ENCODE measurements at regions of chr2 and their contacts with region 1.

Region 1: DNA sequence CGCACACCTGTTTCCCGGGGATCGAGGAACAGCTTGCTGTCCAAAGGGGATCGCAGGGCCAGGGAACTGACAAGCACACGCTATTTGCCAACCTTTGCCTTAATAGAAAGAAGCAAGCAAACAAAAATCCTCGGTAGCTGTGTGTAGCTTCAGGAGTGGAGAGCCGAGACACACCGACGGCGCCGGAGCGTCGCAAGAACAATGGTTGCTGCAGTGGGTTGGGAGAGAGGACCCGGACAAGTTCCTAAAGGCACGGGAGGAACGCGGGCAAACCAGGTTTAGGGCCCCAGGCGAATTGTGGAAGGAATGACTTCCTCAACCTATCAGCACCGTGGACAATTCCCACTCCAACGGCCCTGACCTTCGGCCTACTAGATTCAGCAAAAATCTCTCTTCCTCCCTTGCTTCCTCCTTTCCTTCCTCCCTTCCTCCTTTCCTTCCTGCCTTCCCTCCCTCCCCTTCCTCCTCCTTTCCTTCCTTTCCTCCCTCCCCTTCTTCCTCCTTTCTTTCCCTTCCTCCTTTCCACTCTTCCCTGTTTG is 4.9 kb upstream of the NEUROD1 start:
- DNase-seq: no peak
- H3K4me3 ChIP-seq: no peak overlapping the region
- H3K27ac ChIP-seq: no peak overlapping the region
- H3K4me1 ChIP-seq: no peaks in the 10 kb centered on the region
- H3K27me3 ChIP-seq: no peaks in the 10 kb centered on the region
- CTCF ChIP-seq: no peak
- EP300 ChIP-seq: no peak
- POLR2A ChIP-seq: no peak

Region 2: DNA sequence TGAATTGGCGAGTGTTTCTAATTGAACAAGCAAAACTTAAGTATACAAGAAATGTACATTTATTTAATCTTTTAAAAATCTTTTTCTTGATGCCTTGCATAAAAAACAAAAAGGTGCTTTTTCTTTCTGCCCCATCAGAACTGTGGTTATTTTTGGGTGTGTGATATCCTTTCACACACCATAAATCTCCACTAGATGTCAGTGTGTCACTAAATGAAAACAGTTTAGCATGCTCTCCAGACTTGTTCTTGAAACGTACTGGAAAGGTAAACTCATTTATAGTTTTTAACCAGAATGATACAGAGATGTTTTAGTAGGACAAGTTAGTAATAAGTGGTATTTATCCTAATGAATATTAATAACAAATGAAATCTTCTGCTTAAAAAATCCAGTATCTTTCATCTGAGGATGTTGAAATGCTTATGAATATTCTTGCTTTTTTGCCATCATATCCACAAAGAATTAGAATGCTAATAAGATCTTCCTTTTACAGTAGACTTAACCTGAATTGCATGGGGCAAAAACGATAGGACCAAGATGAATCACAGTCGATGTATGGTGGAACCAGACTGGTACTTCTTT is 608.0 kb before region 1 on chr2:
- intact Hi-C with region 1: no loop called
- DNase-seq: no peak
- H3K4me3 ChIP-seq: no peak overlapping the region
- H3K27ac ChIP-seq: no peak overlapping the region
- H3K4me1 ChIP-seq: no peaks in the 10 kb centered on the region
- H3K27me3 ChIP-seq: no peaks in the 10 kb centered on the region
- CTCF ChIP-seq: peak in 2 of 3 donors; percentile 21 to 40
- EP300 ChIP-seq: no peak
- POLR2A ChIP-seq: no peak

Region 3: GRCh38 chr2:181174611-181175580 is 510.3 kb before region 1 on chr2:
- intact Hi-C with region 1: no loop called
- DNase-seq: no peak
- H3K4me3 ChIP-seq: no peak overlapping the region
- H3K27ac ChIP-seq: no peak overlapping the region
- H3K4me1 ChIP-seq: no peaks in the 10 kb centered on the region
- H3K27me3 ChIP-seq: no peaks in the 10 kb centered on the region
- CTCF ChIP-seq: no peak
- EP300 ChIP-seq: no peak
- POLR2A ChIP-seq: no peak

Region 4: GRCh38 chr2:181354626-181355025 is 330.6 kb before region 1 on chr2:
- intact Hi-C with region 1: loop called in 1 of 4 experiments (anchors 5 kb)
- DNase-seq: no peak
- H3K4me3 ChIP-seq: no peak overlapping the region
- H3K27ac ChIP-seq: no peak overlapping the region
- H3K4me1 ChIP-seq: no peaks in the 10 kb centered on the region
- H3K27me3 ChIP-seq: no peaks in the 10 kb centered on the region
- CTCF ChIP-seq: no peak
- EP300 ChIP-seq: no peak
- POLR2A ChIP-seq: no peak

Region 5: DNA sequence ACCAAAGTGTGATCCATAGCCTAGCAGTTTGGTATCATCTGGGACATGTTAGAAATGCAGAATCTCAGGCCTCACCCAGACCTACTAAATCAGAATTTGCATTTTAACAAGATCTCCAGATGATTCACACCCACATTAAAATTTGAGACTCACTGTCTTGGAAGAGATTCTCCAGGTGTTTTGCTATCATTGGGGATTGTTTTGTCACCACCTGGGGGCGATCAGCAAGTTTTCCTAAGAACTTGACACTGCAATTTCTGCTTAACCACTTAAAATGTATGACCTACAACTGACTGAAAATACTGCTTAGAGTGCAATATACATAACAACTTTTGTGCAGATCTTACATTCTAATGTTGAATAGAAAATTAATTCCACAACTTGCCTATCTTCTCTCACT is 247.0 kb before region 1 on chr2:
- intact Hi-C with region 1: no loop called
- DNase-seq: no peak
- H3K4me3 ChIP-seq: no peak overlapping the region
- H3K27ac ChIP-seq: no peak overlapping the region
- H3K4me1 ChIP-seq: no peaks in the 10 kb centered on the region
- H3K27me3 ChIP-seq: no peaks in the 10 kb centered on the region
- CTCF ChIP-seq: no peak
- EP300 ChIP-seq: no peak
- POLR2A ChIP-seq: no peak

Region 6: DNA sequence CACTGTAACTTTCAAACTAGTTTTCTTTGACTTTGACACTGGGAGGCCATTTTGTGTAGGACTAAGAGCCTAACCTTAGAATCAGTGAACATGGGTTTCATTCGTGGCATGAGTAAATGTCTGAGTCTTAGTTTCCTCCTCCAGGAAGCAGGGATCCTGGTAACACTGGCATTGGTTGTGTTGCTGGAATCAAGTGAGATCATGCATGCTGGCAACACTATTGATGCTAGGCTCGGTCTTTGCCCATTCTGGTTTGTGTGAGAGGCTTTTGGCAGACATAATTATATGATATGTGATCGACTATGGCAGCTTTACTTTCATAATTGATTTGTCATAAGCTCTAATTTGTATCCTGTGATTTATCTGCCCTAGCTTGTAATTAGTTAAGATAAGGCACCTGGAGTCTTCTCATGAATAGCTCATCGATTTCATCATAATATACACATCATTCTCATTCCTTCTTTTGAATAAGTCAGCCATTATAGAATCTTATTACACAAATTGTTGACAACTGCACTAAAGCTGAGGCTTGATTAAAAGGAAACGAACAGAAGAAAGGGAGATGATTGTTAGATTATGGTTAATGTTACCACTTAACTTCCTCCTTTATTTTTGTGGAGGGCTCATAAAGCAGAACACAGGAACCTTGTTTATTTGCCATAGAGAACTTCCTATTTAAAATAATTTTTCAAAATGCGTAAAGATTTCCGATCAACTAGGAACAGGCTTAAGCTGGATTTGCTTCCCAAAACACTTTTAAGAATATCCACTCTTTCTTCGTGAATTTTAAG is 313.0 kb after region 1 on chr2:
- intact Hi-C with region 1: no loop called
- DNase-seq: no peak
- H3K4me3 ChIP-seq: no peak overlapping the region
- H3K27ac ChIP-seq: no peak overlapping the region
- H3K4me1 ChIP-seq: no peaks in the 10 kb centered on the region
- H3K27me3 ChIP-seq: no peaks in the 10 kb centered on the region
- CTCF ChIP-seq: no peak
- EP300 ChIP-seq: no peak
- POLR2A ChIP-seq: no peak